ENCODE measurements at regions of chr11 and their contacts with region 1.

Region 1: DNA sequence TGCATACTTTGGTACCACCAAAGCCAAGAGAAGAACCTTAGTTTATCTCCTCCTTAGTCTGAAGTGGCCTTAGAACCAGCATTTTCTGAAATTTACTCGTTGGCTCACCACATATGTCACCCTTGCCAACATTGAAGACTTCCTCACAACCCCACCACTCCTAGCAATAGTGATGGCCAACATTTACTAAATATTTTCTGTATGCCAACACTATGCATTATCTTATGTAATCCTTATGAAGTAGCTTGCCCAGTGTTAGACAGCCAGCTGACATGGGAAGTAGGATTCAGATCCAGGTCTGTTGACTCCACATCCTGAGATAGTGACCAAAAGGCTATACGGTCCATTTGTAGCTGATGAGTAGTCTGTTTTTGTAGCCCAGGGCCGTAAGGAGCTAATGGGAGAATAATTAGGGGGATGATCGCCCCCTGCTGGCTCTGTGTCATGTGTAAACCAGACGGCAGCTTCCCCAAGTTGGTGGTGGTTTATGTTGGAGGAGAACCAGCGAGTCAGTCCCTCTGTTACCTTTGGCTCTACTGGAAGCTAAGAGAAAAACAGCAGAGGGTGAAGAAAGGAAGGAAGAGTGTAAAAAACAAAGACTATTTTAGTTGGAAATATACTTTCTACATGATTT is 120.5 kb upstream of the RASSF10 start:
- DNase-seq: peak; percentile 71
- ATAC-seq: peak; percentile 90
- H3K4me3 ChIP-seq: no peak overlapping the region
- H3K27ac ChIP-seq: no peak overlapping the region
- H3K4me1 ChIP-seq: no peaks in the 10 kb centered on the region
- H3K27me3 ChIP-seq: no peaks in the 10 kb centered on the region
- CTCF ChIP-seq: peak; percentile 88
- EP300 ChIP-seq: no peak
- POLR2A ChIP-seq: no peak
- RAD21 ChIP-seq: peak; percentile 89

Region 2: GRCh38 chr11:12642040-12642439 is 246.6 kb before region 1 on chr11:
- CTCF ChIA-PET with region 1: no interaction called
- POLR2A ChIA-PET with region 1: no interaction called
- in situ Hi-C with region 1: no loop called
- intact Hi-C with region 1: loop called (anchors 2 kb)
- DNase-seq: peak; percentile 57
- ATAC-seq: peak; percentile 82
- H3K4me3 ChIP-seq: peak overlapping the region; percentile 1 to 48 (median 14); a peak in 4 of 6 replicates
- H3K27ac ChIP-seq: peak overlapping the region; percentile 17
- H3K4me1 ChIP-seq: peaks cover 25% of the 10 kb centered on the region
- H3K27me3 ChIP-seq: no peaks in the 10 kb centered on the region
- CTCF ChIP-seq: 0 out of 2 replicates have a peak, but pooled peaks have one; percentile 10
- EP300 ChIP-seq: 0 out of 4 replicates have a peak, but pooled peaks of 1 of the 2 experiments have one; percentile 23
- POLR2A ChIP-seq: no peak
- RAD21 ChIP-seq: no peak

Region 3: GRCh38 chr11:12769834-12770345 is 118.8 kb before region 1 on chr11:
- CTCF ChIA-PET with region 1: no interaction called
- POLR2A ChIA-PET with region 1: no interaction called
- in situ Hi-C with region 1: no loop called
- intact Hi-C with region 1: loop called (anchors 10 kb)
- DNase-seq: no peak
- ATAC-seq: no peak
- H3K4me3 ChIP-seq: no peak overlapping the region
- H3K27ac ChIP-seq: no peak overlapping the region
- H3K4me1 ChIP-seq: peaks cover 26% of the 10 kb centered on the region
- H3K27me3 ChIP-seq: no peaks in the 10 kb centered on the region
- CTCF ChIP-seq: no peak
- EP300 ChIP-seq: no peak
- POLR2A ChIP-seq: no peak
- RAD21 ChIP-seq: no peak

Region 4: GRCh38 chr11:12838463-12839123 is 50.0 kb before region 1 on chr11:
- CTCF ChIA-PET with region 1: no interaction called
- POLR2A ChIA-PET with region 1: no interaction called
- in situ Hi-C with region 1: no loop called
- intact Hi-C with region 1: no loop called
- DNase-seq: no peak
- ATAC-seq: no peak
- H3K4me3 ChIP-seq: no peak overlapping the region
- H3K27ac ChIP-seq: no peak overlapping the region
- H3K4me1 ChIP-seq: peaks cover 47% of the 10 kb centered on the region
- H3K27me3 ChIP-seq: no peaks in the 10 kb centered on the region
- CTCF ChIP-seq: no peak
- EP300 ChIP-seq: no peak
- POLR2A ChIP-seq: no peak
- RAD21 ChIP-seq: no peak

Measured in HepG2 (cell line).